ENCODE measurements at regions of chr15 and their contacts with region 1.

Region 1: DNA sequence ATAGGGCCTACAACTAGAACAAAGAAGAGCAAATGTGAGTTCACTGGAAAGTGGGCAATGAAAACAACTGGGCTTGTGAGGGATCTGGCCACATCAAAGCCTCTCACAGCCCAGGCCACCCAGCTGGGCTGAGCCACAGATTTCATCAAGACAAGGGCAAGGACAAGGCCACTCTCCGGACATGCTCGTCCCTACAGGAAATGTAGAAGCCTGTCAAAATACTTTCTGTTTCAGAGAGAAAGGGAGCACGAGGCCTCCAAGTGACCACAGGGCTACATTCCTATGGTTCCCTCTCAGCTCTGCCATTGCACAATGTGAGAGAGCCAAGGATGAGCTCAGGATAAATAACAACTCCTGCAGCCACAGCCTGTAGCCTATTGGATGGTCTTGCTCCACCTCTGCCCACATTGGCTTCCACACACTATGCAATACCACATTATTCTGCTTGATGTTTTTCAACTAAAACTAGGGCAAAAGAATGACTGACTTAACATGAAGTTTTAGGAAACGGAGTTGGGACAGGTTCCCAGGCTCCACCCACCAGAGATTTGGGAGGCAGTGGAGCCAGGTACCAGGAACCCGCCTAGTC is 12.1 kb downstream of the TBC1D2B start:
- DNase-seq: no peak
- ATAC-seq: peak; percentile 24
- H3K4me3 ChIP-seq: peak overlapping the region; percentile 25
- H3K4me3 Mint-ChIP-seq: no peak overlapping the region
- H3K27ac ChIP-seq: peak overlapping the region; percentile 17
- H3K27ac Mint-ChIP-seq: peak overlapping the region in 1 of 9 donors; percentile 94
- H3K4me1 ChIP-seq: peaks cover 82 to 84% of the 10 kb centered on the region in 2 donors
- H3K4me1 Mint-ChIP-seq: peaks cover 1 to 64% (median 3%) of the 10 kb centered on the region in 7 donors
- H3K27me3 ChIP-seq: no peaks in the 10 kb centered on the region
- H3K27me3 Mint-ChIP-seq: no peaks in the 10 kb centered on the region

Region 2: GRCh38 chr15:78034495-78035191 is 30.7 kb before region 1 on chr15:
- CTCF ChIA-PET with region 1: interaction called, 15 read pairs
- POLR2A ChIA-PET with region 1: interaction called, 78 read pairs
- intact Hi-C with region 1: loop called (anchors 1 to 2 kb)
- DNase-seq: peak; percentile 33 to 78 (median 75)
- ATAC-seq: peak; percentile 87
- H3K4me3 ChIP-seq: peak overlapping the region; percentile 21
- H3K4me3 Mint-ChIP-seq: peak overlapping the region; percentile 56 to 82 (median 77)
- H3K27ac ChIP-seq: peak overlapping the region; percentile 42
- H3K27ac Mint-ChIP-seq: peak overlapping the region; percentile 71 to 97 (median 92)
- H3K4me1 ChIP-seq: peaks cover 60% of the 10 kb centered on the region in 2 donors
- H3K4me1 Mint-ChIP-seq: peaks cover 65 to 84% (median 76%) of the 10 kb centered on the region in 7 donors
- H3K27me3 ChIP-seq: no peaks in the 10 kb centered on the region
- H3K27me3 Mint-ChIP-seq: no peaks in the 10 kb centered on the region

Region 3: GRCh38 chr15:78040653-78041244 is 24.6 kb before region 1 on chr15:
- CTCF ChIA-PET with region 1: interaction called, 15 read pairs
- POLR2A ChIA-PET with region 1: interaction called, 292 read pairs
- intact Hi-C with region 1: loop called in 1 of 2 experiments (anchors 2 kb)
- DNase-seq: no peak
- ATAC-seq: no peak
- H3K4me3 ChIP-seq: no peak overlapping the region
- H3K4me3 Mint-ChIP-seq: peak overlapping the region in 6 of 10 donors; percentile 27 to 53 (median 36)
- H3K27ac ChIP-seq: no peak overlapping the region
- H3K27ac Mint-ChIP-seq: peak overlapping the region; percentile 12 to 90 (median 68)
- H3K4me1 ChIP-seq: peaks cover 58 to 83% of the 10 kb centered on the region in 2 donors
- H3K4me1 Mint-ChIP-seq: peaks cover 56 to 95% (median 79%) of the 10 kb centered on the region in 7 donors
- H3K27me3 ChIP-seq: no peaks in the 10 kb centered on the region
- H3K27me3 Mint-ChIP-seq: no peaks in the 10 kb centered on the region

Region 4: DNA sequence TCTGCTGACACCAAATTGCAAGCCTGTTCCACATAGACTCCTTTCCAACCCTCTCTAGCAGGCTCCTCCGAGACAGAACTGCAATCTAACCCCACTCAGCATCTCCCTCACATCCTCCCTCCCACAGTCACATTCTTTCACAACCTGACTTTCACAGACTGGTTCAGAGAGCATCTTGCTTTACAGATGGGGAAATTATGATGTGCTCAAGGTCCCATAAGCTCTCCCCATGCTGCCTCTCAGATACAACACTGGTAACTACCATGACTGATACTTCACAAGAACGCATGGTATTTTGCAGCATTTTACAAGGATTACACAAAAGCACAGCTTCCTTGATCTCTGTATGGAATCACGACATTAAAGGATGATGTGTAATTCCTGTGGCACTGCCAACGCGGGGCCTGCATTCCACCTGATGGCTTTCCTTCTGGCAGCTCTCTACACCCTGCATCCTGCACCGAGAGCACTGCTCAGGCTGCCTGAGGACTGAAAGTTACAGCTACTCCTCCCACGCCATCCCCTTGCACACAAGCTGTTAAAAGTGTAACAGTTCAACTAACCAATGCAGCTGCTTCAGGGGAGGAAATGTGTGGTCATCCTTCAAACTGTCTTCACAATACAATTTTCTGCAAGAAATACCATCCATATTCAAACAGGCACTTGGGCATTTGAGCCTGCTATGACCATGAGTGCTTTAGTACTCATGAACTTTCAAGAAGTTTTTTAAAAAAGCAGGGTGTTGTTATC is 15.5 kb before region 1 on chr15:
- CTCF ChIA-PET with region 1: interaction called, 16 read pairs
- POLR2A ChIA-PET with region 1: interaction called, 292 read pairs
- intact Hi-C with region 1: loop called (anchors 1 kb)
- DNase-seq: peak in 4 of 9 donors; percentile 34 to 63 (median 41)
- ATAC-seq: peak; percentile 61
- H3K4me3 ChIP-seq: peak overlapping the region; percentile 31
- H3K4me3 Mint-ChIP-seq: peak overlapping the region; percentile 59 to 84 (median 67)
- H3K27ac ChIP-seq: peak overlapping the region; percentile 70
- H3K27ac Mint-ChIP-seq: peak overlapping the region; percentile 82 to 98 (median 92)
- H3K4me1 ChIP-seq: peaks cover 75 to 100% of the 10 kb centered on the region in 2 donors
- H3K4me1 Mint-ChIP-seq: peaks cover 70 to 100% (median 94%) of the 10 kb centered on the region in 7 donors
- H3K27me3 ChIP-seq: no peaks in the 10 kb centered on the region
- H3K27me3 Mint-ChIP-seq: no peaks in the 10 kb centered on the region

Region 5: GRCh38 chr15:78179286-78179840 is 114.0 kb after region 1 on chr15:
- CTCF ChIA-PET with region 1: no interaction called
- POLR2A ChIA-PET with region 1: no interaction called
- intact Hi-C with region 1: no loop called
- DNase-seq: no peak
- ATAC-seq: no peak
- H3K4me3 ChIP-seq: no peak overlapping the region
- H3K4me3 Mint-ChIP-seq: no peak overlapping the region
- H3K27ac ChIP-seq: no peak overlapping the region
- H3K27ac Mint-ChIP-seq: no peak overlapping the region
- H3K4me1 ChIP-seq: peaks cover 0 to 4% of the 10 kb centered on the region in 2 donors
- H3K4me1 Mint-ChIP-seq: peaks cover 6 to 14% (median 11%) of the 10 kb centered on the region in 7 donors
- H3K27me3 ChIP-seq: no peaks in the 10 kb centered on the region
- H3K27me3 Mint-ChIP-seq: peaks cover 0 to 2% (median 0%) of the 10 kb centered on the region in 5 donors